Activated CD4-positive, alpha-beta T cell treated with anti-CD3 and anti-CD28 coated beads for 36 hours (primary cell): ENCODE measurements at regions of chr2 and their contacts with region 1.

Region 1: DNA sequence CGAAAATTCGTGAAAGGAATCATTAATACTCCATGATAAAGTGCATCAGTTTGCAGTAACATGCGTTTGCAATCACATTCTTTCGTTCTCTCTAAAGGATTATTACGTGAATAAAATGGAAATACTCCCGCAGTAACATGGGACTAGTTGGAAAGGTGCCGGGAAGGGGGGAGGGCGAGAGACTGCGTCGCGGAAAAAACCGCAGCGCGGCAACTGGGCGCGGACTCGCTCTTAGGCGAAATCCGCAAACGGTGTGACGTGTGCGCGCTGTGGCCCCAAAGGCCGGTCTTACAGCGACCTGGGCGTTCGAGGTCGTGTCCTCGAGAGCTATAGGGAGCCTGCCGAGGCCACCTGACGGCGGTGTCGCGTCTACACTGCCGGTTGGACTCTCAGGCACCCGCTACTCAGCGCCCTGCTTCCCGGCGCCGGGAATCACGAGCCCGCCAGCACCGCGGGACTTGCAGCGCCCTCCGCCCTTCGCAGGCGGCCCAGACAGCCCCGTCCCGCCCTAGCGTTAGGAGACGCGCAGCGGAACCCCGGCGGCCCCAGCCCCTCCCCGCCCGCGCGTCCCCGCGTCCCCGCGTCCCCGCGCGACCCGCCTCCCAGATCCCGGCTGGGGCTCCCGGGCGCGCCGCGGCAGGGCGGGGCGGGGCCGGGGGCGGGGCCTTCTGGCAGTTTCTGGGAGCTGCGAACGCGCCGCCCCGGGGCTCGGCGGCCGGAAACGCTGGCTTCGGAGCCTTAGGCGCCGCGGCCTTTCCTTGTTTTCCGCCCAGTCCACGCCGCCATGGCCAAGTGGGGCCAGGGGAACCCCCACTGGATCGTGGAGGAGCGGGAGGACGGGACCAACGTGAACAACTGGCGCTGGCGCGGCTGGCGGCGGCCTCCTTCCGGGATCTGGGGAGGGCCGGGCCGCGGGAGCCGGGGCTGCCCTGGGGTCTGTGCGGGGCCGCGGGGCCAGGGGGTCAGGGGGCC is 15.1 kb downstream of the C2orf74 start:
- DNase-seq: peak; percentile 97
- ATAC-seq: peak; percentile 90
- H3K4me3 Mint-ChIP-seq: peak overlapping the region; percentile 86
- H3K27ac Mint-ChIP-seq: peak overlapping the region; percentile 76
- H3K4me1 Mint-ChIP-seq: peaks cover 46% of the 10 kb centered on the region
- H3K27me3 Mint-ChIP-seq: no peaks in the 10 kb centered on the region

Region 2: GRCh38 chr2:60806988-60807681 is 369.9 kb before region 1 on chr2:
- CTCF ChIA-PET with region 1: no interaction called
- POLR2A ChIA-PET with region 1: no interaction called
- intact Hi-C with region 1: loop called (anchors 5 to 10 kb)
- DNase-seq: peak; percentile 83
- ATAC-seq: peak; percentile 92
- H3K4me3 Mint-ChIP-seq: peak overlapping the region; percentile 41
- H3K27ac Mint-ChIP-seq: peak overlapping the region; percentile 86
- H3K4me1 Mint-ChIP-seq: peaks cover 53% of the 10 kb centered on the region
- H3K27me3 Mint-ChIP-seq: no peaks in the 10 kb centered on the region

Region 3: GRCh38 chr2:61016808-61017555 is 160.1 kb before region 1 on chr2:
- CTCF ChIA-PET with region 1: no interaction called
- POLR2A ChIA-PET with region 1: no interaction called
- intact Hi-C with region 1: loop called (anchors 1 to 5 kb)
- DNase-seq: peak; percentile 81
- ATAC-seq: peak; percentile 75
- H3K4me3 Mint-ChIP-seq: peak overlapping the region; percentile 98
- H3K27ac Mint-ChIP-seq: peak overlapping the region; percentile 95
- H3K4me1 Mint-ChIP-seq: peaks cover 32% of the 10 kb centered on the region
- H3K27me3 Mint-ChIP-seq: no peaks in the 10 kb centered on the region

Region 4: GRCh38 chr2:61144697-61145268 is 32.3 kb before region 1 on chr2:
- CTCF ChIA-PET with region 1: interaction called, 3 read pairs
- POLR2A ChIA-PET with region 1: interaction called, 9 read pairs
- intact Hi-C with region 1: loop called (anchors 1 to 2 kb)
- DNase-seq: peak; percentile 96
- ATAC-seq: peak; percentile 99
- H3K4me3 Mint-ChIP-seq: peak overlapping the region; percentile 98
- H3K27ac Mint-ChIP-seq: peak overlapping the region; percentile 96
- H3K4me1 Mint-ChIP-seq: peaks cover 4% of the 10 kb centered on the region
- H3K27me3 Mint-ChIP-seq: no peaks in the 10 kb centered on the region

Region 5: DNA sequence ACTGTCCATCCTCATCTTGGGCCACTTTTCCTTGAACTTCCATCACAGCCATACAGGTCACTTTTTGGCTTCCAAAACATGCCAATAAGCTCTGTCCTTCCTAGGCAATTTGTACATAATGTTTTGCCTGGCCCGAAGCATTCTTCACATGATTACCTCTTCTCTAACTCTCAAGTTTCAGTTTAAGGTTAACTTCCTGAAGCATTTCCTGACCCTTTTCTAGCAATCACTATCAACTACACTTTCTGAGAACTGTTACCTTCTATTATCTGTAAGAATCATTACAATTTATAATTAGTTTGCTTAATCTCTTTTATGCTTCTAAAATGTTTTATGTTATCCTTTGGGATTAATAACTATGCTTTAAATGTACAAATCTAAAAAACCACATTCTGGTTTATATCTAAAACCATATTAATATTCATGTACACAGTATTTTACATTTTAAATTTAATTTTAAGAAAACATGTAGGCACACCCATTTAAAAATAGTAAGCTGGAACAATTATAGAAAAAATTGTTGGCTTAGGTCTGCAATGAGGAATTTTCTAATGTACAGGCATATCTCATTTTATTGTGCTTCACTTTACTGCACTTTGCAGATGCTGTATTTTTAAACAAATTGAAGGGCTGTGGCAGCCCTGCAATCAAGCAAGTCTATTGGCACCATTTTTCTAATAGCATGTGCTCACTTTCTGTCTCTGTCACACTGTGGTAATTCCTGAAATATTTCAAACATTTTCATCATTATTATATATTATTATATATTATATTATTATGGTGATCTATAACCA is 61.4 kb after region 1 on chr2:
- CTCF ChIA-PET with region 1: no interaction called
- POLR2A ChIA-PET with region 1: no interaction called
- intact Hi-C with region 1: no loop called
- DNase-seq: no peak
- ATAC-seq: no peak
- H3K4me3 Mint-ChIP-seq: no peak overlapping the region
- H3K27ac Mint-ChIP-seq: peak overlapping the region; percentile 74
- H3K4me1 Mint-ChIP-seq: peaks cover 14% of the 10 kb centered on the region
- H3K27me3 Mint-ChIP-seq: no peaks in the 10 kb centered on the region

Region 6: GRCh38 chr2:61694312-61695274 is 517.6 kb after region 1 on chr2:
- CTCF ChIA-PET with region 1: no interaction called
- POLR2A ChIA-PET with region 1: no interaction called
- intact Hi-C with region 1: loop called in 1 of 2 experiments (anchors 1 kb)
- DNase-seq: peak; percentile 93
- ATAC-seq: peak; percentile 98
- H3K4me3 Mint-ChIP-seq: peak overlapping the region; percentile 80
- H3K27ac Mint-ChIP-seq: peak overlapping the region; percentile 86
- H3K4me1 Mint-ChIP-seq: peaks cover 14% of the 10 kb centered on the region
- H3K27me3 Mint-ChIP-seq: no peaks in the 10 kb centered on the region

Region 7: GRCh38 chr2:61888267-61889055 is 711.4 kb after region 1 on chr2 and contains the start of gene CCT4:
- CTCF ChIA-PET with region 1: no interaction called
- POLR2A ChIA-PET with region 1: no interaction called
- intact Hi-C with region 1: loop called in 1 of 2 experiments (anchors 1 kb)
- DNase-seq: peak; percentile 93
- ATAC-seq: peak; percentile 79
- H3K4me3 Mint-ChIP-seq: peak within 1 kb of the TSS; percentile 99
- H3K27ac Mint-ChIP-seq: peak within 1 kb of the TSS; percentile 99
- H3K4me1 Mint-ChIP-seq: peaks cover 31% of the 10 kb centered on the region
- H3K27me3 Mint-ChIP-seq: no peaks in the 10 kb centered on the region
- total RNA-seq, gene CCT4: 255 to 373 TPM